ENCODE measurements at regions of chr1 and their contacts with region 1.

Region 1: DNA sequence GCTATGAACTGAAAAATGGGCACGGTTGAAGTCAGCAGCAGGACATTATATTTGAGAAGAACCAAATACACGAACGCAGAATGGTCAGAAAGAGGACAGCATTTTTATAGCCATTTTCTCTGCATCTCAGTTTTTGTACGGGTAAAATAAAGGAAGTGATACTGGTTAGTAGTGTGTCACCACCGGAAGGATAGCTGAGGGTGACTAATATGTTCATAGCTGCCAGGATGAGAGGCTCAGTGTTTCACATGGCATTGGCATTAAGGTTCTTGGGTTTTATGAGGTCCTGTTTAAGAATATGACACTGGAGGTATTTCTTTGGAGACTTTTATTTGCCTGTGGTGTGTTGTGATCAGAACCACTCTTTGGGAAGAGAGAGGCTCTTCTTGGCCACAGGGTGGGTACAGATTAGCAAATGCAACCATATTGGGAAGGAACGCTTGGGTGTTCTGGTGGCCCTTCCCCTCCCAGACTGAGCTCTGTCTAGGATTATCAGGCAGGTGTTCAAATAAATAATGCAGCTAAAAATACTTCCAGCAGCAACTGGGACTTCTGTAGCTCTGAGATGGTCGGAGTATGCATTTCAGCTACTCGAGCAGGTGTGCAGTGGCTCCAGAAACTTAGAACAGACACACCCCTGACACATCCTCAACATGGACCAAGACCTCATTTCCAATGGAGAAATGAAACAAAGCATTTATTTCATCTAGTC is 158.2 kb downstream of the PBX1 start:
- DNase-seq: no peak
- ATAC-seq: peak in 1 of 8 donors; percentile 19
- H3K4me3 ChIP-seq: no peak overlapping the region
- H3K27ac ChIP-seq: peak overlapping the region in 1 of 10 donors; percentile 33
- H3K4me1 ChIP-seq: peaks cover 7 to 77% (median 55%) of the 10 kb centered on the region in 9 donors
- H3K27me3 ChIP-seq: peaks cover 0 to 12% (median 0%) of the 10 kb centered on the region in 7 donors
- CTCF ChIP-seq: no peak

Region 2: GRCh38 chr1:164440232-164440631 is 276.9 kb before region 1 on chr1:
- intact Hi-C with region 1: loop called in 1 of 10 experiments (anchors 10 kb)
- DNase-seq: peak in 1 of 2 donors; percentile 56
- ATAC-seq: peak; percentile 88 to 100 (median 98)
- H3K4me3 ChIP-seq: no peak overlapping the region
- H3K27ac ChIP-seq: peak overlapping the region in 1 of 10 donors; percentile 3
- H3K4me1 ChIP-seq: peaks cover 0 to 20% (median 3%) of the 10 kb centered on the region in 9 donors
- H3K27me3 ChIP-seq: no peaks in the 10 kb centered on the region
- CTCF ChIP-seq: peak in 8 of 9 donors; percentile 44 to 70 (median 56)

Region 3: DNA sequence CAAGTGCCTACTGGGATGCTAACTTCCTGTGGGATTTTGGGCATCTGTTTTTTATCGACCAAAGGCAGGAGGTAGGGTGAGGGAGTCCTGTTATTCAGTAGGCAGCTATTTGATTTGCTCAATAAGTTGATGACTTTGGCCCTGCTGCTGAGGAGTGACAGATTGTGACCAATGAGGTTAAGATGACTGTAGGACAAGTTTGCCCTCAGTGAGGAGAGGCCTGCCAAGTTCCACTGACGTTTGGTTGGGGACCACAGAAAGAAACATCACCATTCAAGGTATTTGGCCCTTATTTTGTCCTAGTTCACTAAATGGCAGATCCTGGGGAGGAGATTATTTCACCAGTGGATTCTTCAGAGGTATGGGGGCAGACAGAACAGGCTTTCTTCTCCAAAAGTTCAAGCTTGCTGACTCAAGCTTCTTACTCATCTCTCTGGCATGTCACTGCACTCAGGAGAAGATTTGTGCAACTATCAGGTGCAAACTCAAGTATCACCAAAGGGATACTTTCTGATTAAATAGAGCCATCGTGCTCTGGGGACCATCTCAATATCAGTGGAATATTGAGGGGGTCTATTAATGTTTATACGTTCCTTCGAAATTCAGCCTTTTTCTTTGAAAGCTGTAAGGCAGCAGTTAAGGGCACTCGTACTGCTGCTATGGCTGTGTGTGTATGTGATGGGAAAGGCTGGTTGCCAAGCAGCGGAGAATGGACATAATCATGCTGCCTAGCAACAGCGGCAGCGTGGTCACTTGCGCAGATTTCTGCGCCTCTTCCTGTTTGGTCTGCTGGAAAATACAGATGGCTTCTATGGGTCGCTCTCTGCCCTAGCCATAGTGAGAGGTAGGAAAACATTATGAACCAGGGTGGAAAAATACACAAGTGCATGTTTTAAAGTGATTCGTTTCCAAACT is 79.4 kb before region 1 on chr1:
- intact Hi-C with region 1: loop called in 1 of 10 experiments (anchors 5 kb)
- DNase-seq: peak; percentile 47 to 68
- ATAC-seq: peak; percentile 45 to 86 (median 73)
- H3K4me3 ChIP-seq: peak overlapping the region in 1 of 10 donors; percentile 3
- H3K27ac ChIP-seq: peak overlapping the region; percentile 21 to 87 (median 78)
- H3K4me1 ChIP-seq: peaks cover 17 to 90% (median 65%) of the 10 kb centered on the region in 9 donors
- H3K27me3 ChIP-seq: no peaks in the 10 kb centered on the region
- CTCF ChIP-seq: no peak

Region 4: DNA sequence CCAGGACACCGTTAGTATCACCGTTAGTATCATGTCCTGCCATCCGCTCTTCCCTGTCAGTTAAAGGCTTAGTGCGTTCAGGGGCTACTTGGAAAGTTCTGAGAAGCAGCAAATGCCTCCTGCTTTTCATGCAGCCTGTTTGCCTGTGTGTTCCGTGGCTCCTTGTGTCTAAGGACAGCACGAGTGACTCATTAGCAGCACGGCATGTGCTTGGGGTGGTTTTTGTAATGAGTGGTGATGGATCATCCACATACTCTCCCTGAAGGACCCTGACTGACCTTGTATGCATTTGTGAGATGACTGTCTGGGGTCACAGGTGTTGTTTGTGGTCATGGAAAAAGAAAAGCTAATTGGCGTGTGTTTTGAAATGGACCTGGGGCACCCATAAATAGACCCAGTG is 63.7 kb after region 1 on chr1:
- intact Hi-C with region 1: loop called in 2 of 10 experiments (anchors 5 kb)
- DNase-seq: peak in 1 of 2 donors; percentile 24
- ATAC-seq: peak; percentile 40 to 93 (median 68)
- H3K4me3 ChIP-seq: no peak overlapping the region
- H3K27ac ChIP-seq: peak overlapping the region in 9 of 10 donors; percentile 35 to 80 (median 62)
- H3K4me1 ChIP-seq: peaks cover 12 to 67% (median 48%) of the 10 kb centered on the region in 9 donors
- H3K27me3 ChIP-seq: no peaks in the 10 kb centered on the region
- CTCF ChIP-seq: no peak

Measured in heart right ventricle (tissue), 16 donors.